Right ventricle myocardium superior (tissue), 1 donor: ENCODE measurements at regions of chr15 and their contacts with region 1.

Region 1: GRCh38 chr15:35560870-35561269 is 14.9 kb upstream of the DPH6 start:
- DNase-seq: no peak
- ATAC-seq: no peak

Region 2: DNA sequence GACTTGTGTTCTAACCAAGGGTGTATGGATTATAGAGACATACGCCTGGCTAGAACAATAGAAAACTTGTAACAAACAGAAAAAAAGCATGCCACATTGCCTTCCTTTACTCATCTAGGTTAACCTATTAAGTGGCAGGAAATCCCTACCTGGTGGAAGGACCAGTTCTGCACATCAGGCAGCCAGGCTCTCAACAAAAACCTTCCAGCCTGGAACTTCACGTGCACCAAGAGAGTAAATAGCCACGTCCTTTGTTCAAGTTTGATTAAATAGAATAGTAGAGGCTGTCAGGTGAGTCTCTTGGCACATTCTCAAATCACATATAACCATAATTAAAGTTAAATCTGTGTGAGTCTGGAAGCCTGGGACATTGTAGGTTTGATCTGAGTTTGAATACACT is 70.1 kb after region 1 on chr15:
- intact Hi-C with region 1: loop called (anchors 2 kb)
- DNase-seq: no peak
- ATAC-seq: peak; percentile 8